ENCODE measurements at regions of chr1 and their contacts with region 1.

Region 1: GRCh38 chr1:156445789-156446263 is 54.7 kb downstream of the MEF2D start:
- DNase-seq: peak; percentile 90
- ATAC-seq: peak; percentile 89
- H3K4me3 Mint-ChIP-seq: no peak overlapping the region
- H3K27ac Mint-ChIP-seq: no peak overlapping the region
- H3K4me1 Mint-ChIP-seq: peaks cover 16% of the 10 kb centered on the region
- H3K27me3 Mint-ChIP-seq: peaks cover 33% of the 10 kb centered on the region

Region 2: GRCh38 chr1:155261852-155262673 is 1183.8 kb before region 1 on chr1 and contains the start of gene SCAMP3:
- CTCF ChIA-PET with region 1: no interaction called
- POLR2A ChIA-PET with region 1: no interaction called
- intact Hi-C with region 1: no loop called
- DNase-seq: peak; percentile 93
- ATAC-seq: peak; percentile 95
- H3K4me3 Mint-ChIP-seq: peak within 1 kb of the TSS; percentile 98
- H3K27ac Mint-ChIP-seq: peak within 1 kb of the TSS; percentile 91
- H3K4me1 Mint-ChIP-seq: peaks cover 27% of the 10 kb centered on the region
- H3K27me3 Mint-ChIP-seq: no peaks in the 10 kb centered on the region
- total RNA-seq, gene SCAMP3: 82.0 to 95.5 TPM

Region 3: DNA sequence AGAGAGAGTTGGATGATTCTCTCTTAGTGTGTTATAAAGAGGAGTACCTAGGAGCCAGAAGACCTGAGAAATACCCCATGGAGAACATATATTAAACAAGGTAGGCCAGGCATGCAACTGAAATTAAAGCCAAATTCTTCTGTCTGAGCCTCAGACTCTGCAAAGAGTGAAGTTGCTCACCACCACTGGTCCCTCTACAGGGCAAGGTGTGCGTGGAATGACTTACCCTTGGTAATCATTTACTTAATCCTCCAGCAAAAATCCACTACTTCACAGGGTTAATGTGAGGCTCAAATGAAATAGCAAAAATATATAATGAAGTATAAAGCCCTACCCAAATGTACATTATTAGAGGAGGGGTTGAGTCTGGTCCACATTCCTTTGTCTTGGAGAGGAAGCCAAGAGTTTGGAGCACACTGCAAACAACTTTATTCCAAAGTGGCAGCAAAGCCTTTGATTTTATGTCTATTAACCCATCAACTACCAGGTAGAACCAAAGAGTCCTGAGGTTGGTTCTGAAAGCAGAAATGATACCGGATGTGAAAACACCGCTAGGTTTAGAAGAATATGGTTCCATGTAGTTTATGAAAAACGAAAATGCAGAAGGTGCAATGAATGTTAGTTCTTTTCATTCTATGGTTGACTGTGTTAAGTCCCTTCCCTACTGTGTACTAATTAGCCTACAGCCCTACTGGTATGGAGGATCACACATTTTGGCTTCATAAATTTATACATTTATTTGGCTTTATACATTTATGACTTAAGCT is 433.6 kb before region 1 on chr1:
- CTCF ChIA-PET with region 1: no interaction called
- POLR2A ChIA-PET with region 1: no interaction called
- intact Hi-C with region 1: no loop called
- DNase-seq: no peak
- ATAC-seq: no peak
- H3K4me3 Mint-ChIP-seq: no peak overlapping the region
- H3K27ac Mint-ChIP-seq: no peak overlapping the region
- H3K4me1 Mint-ChIP-seq: peaks cover 2% of the 10 kb centered on the region
- H3K27me3 Mint-ChIP-seq: no peaks in the 10 kb centered on the region

Region 4: DNA sequence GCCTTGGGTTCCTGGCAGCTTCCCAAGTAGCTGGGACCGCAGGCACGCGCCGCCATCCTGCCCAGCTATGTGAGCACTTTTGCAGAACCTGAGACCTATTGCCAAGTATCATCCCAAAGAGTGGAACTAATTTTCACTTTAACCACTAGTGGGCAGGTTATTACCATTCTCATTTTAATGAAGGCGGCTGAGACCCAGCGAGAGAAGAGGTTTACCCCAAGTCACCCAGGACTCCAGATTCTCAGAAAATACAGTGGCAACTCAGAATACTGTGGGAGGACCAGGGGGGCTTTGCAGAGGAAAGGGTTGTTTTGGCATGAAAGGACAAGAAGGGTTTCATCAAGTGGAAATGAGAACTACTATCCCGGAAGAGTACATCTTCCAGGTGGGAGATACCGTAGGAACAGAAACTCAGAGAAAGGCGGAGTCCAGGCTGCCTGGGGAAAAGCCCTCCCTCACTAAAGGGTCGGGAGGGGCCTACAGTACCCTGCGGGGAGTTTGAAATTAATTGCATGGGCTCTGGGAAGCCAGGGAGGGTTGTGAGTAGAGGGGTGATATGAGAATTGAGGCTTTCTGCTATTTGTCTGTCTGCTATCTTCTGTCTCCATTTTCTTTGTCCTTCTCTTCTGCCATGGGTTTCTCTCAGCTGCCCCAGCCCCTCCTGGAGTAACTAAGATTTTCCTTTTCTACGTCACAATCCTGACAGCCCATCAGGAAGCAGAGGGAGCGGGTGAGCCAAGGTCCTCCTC is 299.6 kb before region 1 on chr1:
- CTCF ChIA-PET with region 1: no interaction called
- POLR2A ChIA-PET with region 1: no interaction called
- intact Hi-C with region 1: loop called in 1 of 2 experiments (anchors 10 kb)
- DNase-seq: peak; percentile 67
- ATAC-seq: peak; percentile 82
- H3K4me3 Mint-ChIP-seq: peak overlapping the region; percentile 37
- H3K27ac Mint-ChIP-seq: peak overlapping the region; percentile 85
- H3K4me1 Mint-ChIP-seq: peaks cover 46% of the 10 kb centered on the region
- H3K27me3 Mint-ChIP-seq: no peaks in the 10 kb centered on the region

Region 5: GRCh38 chr1:156388174-156389137 is 57.4 kb before region 1 on chr1:
- CTCF ChIA-PET with region 1: interaction called, 264 read pairs
- POLR2A ChIA-PET with region 1: interaction called, 8 read pairs
- intact Hi-C with region 1: loop called (anchors 1 kb)
- DNase-seq: no peak
- ATAC-seq: no peak
- H3K4me3 Mint-ChIP-seq: no peak overlapping the region
- H3K27ac Mint-ChIP-seq: no peak overlapping the region
- H3K4me1 Mint-ChIP-seq: peaks cover 5% of the 10 kb centered on the region
- H3K27me3 Mint-ChIP-seq: peaks cover 25% of the 10 kb centered on the region

Region 6: DNA sequence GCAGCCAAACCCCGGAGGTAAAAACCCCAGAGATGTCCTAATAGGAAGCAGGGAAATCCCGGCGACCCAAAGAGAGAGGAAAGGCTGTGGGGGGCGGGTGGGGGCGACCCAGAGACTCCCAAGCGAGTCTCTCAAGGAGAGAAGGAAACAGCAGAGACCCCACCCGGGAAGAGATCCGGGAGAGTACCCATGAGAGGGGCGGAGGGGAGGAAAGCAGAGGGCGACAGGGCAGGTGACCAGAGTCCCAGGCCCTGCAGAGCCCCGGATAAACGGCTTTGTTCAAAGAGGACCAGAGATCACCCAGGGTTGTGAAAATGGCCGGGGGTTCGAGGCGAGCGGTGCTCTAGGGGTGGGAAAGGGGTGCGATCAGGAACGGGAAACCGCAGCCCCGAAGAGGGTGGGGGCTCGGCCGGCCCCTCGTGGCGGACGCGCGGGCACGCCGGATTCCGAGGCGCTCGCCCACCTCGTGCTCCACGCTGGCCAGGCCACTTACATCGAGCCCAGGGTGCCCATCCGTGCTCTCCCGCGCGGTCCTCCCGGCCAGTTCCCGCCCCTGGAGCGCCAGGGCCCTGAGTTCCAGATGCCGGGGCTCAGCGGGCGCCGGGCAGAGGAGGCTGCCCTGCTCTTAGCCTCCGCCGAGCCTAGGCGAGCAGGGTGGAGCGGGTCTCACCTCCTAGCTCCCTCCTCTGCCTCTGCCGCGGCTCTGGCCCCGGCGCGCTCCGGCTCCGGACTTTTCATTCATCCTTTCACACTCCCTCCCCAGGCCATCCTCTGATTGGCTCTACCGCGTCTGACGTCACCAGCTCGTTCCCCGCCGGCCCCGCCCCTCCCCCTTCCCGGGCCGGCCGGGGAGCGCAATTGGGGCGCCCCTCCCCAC is 24.5 kb before region 1 on chr1:
- CTCF ChIA-PET with region 1: interaction called, 16 read pairs
- POLR2A ChIA-PET with region 1: no interaction called
- intact Hi-C with region 1: no loop called
- DNase-seq: peak; percentile 85
- ATAC-seq: peak; percentile 92
- H3K4me3 Mint-ChIP-seq: peak overlapping the region; percentile 70
- H3K27ac Mint-ChIP-seq: no peak overlapping the region
- H3K4me1 Mint-ChIP-seq: peaks cover 17% of the 10 kb centered on the region
- H3K27me3 Mint-ChIP-seq: peaks cover 75% of the 10 kb centered on the region

Region 7: GRCh38 chr1:156608036-156608674 is 162.3 kb after region 1 on chr1:
- CTCF ChIA-PET with region 1: interaction called, 12 read pairs
- POLR2A ChIA-PET with region 1: interaction called, 10 read pairs
- intact Hi-C with region 1: loop called in 1 of 2 experiments (anchors 2 kb)
- DNase-seq: peak; percentile 78
- ATAC-seq: peak; percentile 98
- H3K4me3 Mint-ChIP-seq: no peak overlapping the region
- H3K27ac Mint-ChIP-seq: no peak overlapping the region
- H3K4me1 Mint-ChIP-seq: peaks cover 8% of the 10 kb centered on the region
- H3K27me3 Mint-ChIP-seq: peaks cover 9% of the 10 kb centered on the region